Endothelial cell of umbilical vein (primary cell): ENCODE measurements at regions of chr2 and their contacts with region 1.

Region 1: GRCh38 chr2:101349893-101350662 is 37.2 kb downstream of the CREG2 start:
- DNase-seq: no peak
- H3K4me3 ChIP-seq: no peak overlapping the region
- H3K27ac ChIP-seq: no peak overlapping the region
- H3K4me1 ChIP-seq: no peaks in the 10 kb centered on the region
- H3K27me3 ChIP-seq: no peaks in the 10 kb centered on the region
- CTCF ChIP-seq: peak; percentile 10 to 33
- POLR2A ChIP-seq: no peak

Region 2: GRCh38 chr2:101361121-101361870 is 11.2 kb after region 1 on chr2:
- CTCF ChIA-PET with region 1: interaction called, 11 read pairs
- POLR2A ChIA-PET with region 1: no interaction called
- dilution Hi-C with region 1: no loop called
- intact Hi-C with region 1: no loop called
- DNase-seq: no peak
- H3K4me3 ChIP-seq: no peak overlapping the region
- H3K27ac ChIP-seq: no peak overlapping the region
- H3K4me1 ChIP-seq: no peaks in the 10 kb centered on the region
- H3K27me3 ChIP-seq: peaks cover 12 to 20% of the 10 kb centered on the region in 2 experiments
- CTCF ChIP-seq: no peak
- POLR2A ChIP-seq: no peak

Region 3: GRCh38 chr2:101387151-101387807 is 37.2 kb after region 1 on chr2 and contains the start of gene CREG2:
- CTCF ChIA-PET with region 1: interaction called, 47 read pairs
- POLR2A ChIA-PET with region 1: no interaction called
- dilution Hi-C with region 1: no loop called
- intact Hi-C with region 1: loop called (anchors 2 kb)
- DNase-seq: peak; percentile 74
- H3K4me3 ChIP-seq: peak within 1 kb of the TSS; percentile 32 to 54 (median 43)
- H3K27ac ChIP-seq: no peak within 1 kb of the TSS
- H3K4me1 ChIP-seq: peaks cover 19% of the 10 kb centered on the region
- H3K27me3 ChIP-seq: peaks cover 36 to 46% of the 10 kb centered on the region in 2 experiments
- CTCF ChIP-seq: peak; percentile 53 to 61
- POLR2A ChIP-seq: no peak
- total RNA-seq, gene CREG2: 0.88 and 2.0 TPM in 2 replicates

Region 4: DNA sequence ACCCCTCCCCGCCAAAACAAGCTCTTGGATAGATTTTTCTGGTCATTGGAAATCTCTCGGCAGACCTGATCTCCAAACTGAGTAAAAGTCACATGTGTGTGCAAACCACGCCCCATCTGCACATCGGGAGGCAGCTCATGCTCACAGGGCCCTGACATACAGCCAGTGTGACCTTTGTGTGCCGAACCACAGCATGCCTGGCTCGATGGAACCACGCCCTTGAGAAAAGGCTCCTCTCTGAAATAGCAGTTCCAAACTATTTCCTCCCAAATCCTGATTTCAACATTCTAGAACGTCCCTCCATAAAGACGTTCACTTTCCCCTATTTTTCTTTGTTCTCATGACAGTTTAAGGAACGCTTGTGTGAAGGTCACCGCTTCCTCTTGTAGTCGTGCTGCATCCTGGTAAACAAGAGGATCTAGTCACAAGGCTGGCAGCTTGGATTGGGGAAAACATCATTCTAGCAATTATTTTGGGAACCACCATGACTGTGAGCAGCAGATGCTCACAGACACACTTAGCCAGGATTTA is 288.2 kb after region 1 on chr2:
- CTCF ChIA-PET with region 1: no interaction called
- POLR2A ChIA-PET with region 1: no interaction called
- dilution Hi-C with region 1: no loop called
- intact Hi-C with region 1: no loop called
- DNase-seq: no peak
- H3K4me3 ChIP-seq: no peak overlapping the region
- H3K27ac ChIP-seq: no peak overlapping the region
- H3K4me1 ChIP-seq: no peaks in the 10 kb centered on the region
- H3K27me3 ChIP-seq: no peaks in the 10 kb centered on the region
- CTCF ChIP-seq: no peak
- POLR2A ChIP-seq: no peak